ENCODE measurements at regions of chr1 and their contacts with region 1.

Region 1: DNA sequence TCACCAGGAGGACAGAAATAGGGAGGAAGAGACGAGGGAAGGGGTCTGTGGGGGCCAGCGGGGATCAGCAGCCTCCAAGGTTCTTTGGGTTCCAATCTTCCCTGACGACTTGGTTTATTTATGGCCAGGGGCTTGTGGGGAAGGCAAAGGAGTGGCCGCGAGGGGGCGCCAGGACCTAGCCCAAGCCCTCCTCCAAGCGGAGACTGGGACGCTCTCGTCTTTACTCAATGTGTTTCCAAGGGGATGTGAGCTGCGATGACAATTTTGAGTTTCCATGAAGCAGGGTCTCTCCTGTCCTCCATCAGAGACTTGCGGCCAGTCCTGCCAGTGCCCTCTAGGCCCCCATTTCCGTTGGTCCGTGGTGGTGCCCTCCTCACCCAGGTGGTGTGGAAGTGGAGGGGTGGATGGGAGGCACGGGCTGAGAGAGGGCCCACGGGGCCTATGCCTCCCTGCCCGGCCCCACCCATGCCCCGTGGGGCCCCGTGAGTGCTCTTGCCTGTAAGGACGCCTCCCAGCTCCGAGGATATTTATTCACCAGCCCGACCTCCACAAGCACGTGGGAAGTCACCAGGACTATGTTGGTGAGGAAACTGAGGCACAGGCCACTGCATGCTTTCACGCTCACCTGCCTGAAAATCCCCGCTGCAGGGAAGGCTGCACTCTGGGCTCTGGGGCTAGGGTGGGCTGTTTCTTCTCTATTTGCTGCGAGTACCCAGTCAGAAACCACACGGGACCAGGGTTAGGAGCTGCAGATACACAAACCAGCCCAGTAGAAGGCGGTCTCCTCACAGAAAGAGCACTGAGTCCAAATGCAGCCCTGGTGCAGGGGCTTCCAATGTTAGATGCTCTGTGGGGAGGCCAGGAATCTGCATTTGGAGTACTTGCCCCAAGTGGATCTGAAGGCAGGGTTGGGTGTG is 26.5 kb downstream of the DMRTB1 start:
- DNase-seq: peak in 2 of 3 donors; percentile 77 to 88
- ATAC-seq: peak; percentile 79
- H3K4me3 ChIP-seq: no peak overlapping the region
- H3K4me1 ChIP-seq: peaks cover 2% of the 10 kb centered on the region
- CTCF ChIP-seq: peak; percentile 61

Region 2: GRCh38 chr1:53196485-53197270 is 289.1 kb before region 1 on chr1 and contains the start of gene CPT2:
- intact Hi-C with region 1: no loop called
- DNase-seq: peak; percentile 95 to 98 (median 96)
- ATAC-seq: peak; percentile 99
- H3K4me3 ChIP-seq: peak within 1 kb of the TSS; percentile 88
- H3K4me1 ChIP-seq: peaks cover 13% of the 10 kb centered on the region
- CTCF ChIP-seq: no peak
- total RNA-seq, gene CPT2: 30.1 to 75.3 (median 52.3) TPM

Region 3: GRCh38 chr1:53592521-53592982 is 106.8 kb after region 1 on chr1:
- intact Hi-C with region 1: loop called in 1 of 2 experiments (anchors 5 kb)
- DNase-seq: peak in 2 of 3 donors; percentile 33 to 48
- ATAC-seq: peak; percentile 43
- H3K4me3 ChIP-seq: no peak overlapping the region
- H3K4me1 ChIP-seq: no peaks in the 10 kb centered on the region
- CTCF ChIP-seq: no peak

Region 4: DNA sequence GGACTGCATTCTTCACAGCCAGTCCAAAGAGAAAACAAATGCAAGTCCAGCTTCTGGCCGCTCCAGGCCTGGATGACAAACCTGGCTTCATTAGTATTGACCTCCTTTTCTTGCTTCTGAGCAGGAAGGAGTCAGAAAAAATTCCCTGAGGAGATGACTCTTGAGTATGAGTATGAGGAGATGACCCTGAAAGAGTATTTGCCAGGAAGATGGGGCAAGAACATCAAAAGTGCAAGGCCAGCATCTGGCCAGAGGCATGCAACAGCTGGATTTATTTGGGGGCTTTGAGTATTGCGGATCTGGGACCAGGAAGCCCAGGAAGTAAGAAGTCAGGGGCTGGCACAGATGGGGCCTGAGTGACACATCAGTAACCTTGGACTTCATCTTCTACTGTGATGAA is 139.3 kb after region 1 on chr1:
- intact Hi-C with region 1: no loop called
- DNase-seq: no peak
- ATAC-seq: peak; percentile 26
- H3K4me3 ChIP-seq: no peak overlapping the region
- H3K4me1 ChIP-seq: no peaks in the 10 kb centered on the region
- CTCF ChIP-seq: no peak

Region 5: DNA sequence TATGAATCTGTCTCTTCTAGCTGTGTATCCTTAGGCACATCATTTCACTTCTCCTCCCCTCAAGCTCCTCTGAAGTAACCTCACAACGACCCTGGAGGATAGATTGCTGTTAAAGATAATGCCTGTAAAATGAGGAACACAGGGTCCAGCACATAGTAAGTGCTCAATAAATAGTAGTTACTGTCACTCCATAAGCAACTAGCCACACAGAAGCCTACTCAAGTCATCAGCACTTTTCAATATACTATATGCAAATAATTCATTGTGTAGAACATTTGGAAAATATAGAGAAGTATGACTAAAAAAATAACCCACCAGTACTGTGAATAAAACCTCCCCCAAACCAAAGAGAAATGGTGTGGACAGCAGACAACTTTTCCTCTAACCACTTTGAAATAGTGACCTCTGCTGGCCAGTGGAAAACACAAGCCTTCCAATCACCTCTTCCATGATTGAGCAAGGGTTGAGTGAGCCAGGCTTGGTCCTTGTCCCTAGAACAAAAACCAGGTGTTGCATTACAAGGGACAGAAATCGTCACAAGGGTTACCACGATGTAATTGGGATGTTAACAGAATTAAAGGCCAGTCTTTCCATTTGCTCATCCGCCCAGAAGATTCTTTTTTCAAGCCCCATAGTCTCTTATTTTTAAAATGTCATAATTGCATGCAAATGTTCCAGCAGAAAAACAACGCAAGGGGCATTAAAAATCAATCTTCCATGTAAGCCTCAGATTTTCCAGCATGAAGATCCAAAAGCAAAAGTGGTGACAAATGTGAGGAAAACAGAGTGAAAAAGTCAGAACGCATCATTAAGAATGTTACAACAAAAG is 269.0 kb after region 1 on chr1:
- intact Hi-C with region 1: loop called (anchors 5 to 10 kb)
- DNase-seq: peak in 1 of 3 donors; percentile 71
- ATAC-seq: peak; percentile 64
- H3K4me3 ChIP-seq: no peak overlapping the region
- H3K4me1 ChIP-seq: no peaks in the 10 kb centered on the region
- CTCF ChIP-seq: peak; percentile 50

Measured in mucosa of descending colon (tissue), 3 donors.